Gastrocnemius medialis (tissue), 4 donors: ENCODE measurements at regions of chr4 and their contacts with region 1.

Region 1: DNA sequence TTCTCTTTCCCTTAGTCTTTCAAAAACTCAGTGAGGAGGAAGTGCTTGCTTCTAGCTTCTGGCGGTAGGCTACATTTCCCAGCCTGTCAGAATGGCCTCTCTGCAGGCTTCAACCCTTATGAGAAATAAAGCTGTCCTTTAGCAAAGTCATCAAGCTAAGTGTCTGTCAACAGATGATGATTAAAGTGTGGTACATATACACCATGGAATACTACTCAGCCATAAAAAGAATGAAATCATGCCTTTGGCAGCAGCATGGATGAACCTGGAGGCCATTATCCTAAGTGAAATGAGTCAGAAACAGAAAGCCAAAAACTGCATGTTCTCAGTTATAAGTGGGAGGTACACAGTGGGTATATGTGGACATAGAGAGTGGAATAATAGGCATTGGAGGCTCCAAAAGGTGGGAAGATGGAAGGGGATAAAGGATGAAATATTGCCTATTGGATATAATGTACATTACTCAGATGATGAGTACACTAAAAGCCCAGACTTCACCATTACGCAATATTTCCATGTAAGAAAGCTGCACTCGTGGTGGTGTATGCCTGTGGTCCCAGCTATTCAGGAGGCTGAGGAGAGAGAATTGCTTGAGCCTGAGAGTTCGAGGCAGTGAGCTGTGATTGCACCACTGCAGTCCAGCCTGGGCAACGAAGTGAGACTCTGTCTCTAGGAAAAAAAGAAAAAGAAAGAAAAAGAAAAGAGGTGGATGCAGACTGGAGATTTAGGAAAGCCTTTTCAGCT is 7.9 kb downstream of the TRIM2 start:
- DNase-seq: no peak
- ATAC-seq: peak in 1 of 2 donors; percentile 36
- H3K4me3 ChIP-seq: no peak overlapping the region
- H3K27ac ChIP-seq: no peak overlapping the region
- H3K4me1 ChIP-seq: no peaks in the 10 kb centered on the region
- H3K27me3 ChIP-seq: no peaks in the 10 kb centered on the region
- CTCF ChIP-seq: no peak
- POLR2A ChIP-seq: no peak

Region 2: DNA sequence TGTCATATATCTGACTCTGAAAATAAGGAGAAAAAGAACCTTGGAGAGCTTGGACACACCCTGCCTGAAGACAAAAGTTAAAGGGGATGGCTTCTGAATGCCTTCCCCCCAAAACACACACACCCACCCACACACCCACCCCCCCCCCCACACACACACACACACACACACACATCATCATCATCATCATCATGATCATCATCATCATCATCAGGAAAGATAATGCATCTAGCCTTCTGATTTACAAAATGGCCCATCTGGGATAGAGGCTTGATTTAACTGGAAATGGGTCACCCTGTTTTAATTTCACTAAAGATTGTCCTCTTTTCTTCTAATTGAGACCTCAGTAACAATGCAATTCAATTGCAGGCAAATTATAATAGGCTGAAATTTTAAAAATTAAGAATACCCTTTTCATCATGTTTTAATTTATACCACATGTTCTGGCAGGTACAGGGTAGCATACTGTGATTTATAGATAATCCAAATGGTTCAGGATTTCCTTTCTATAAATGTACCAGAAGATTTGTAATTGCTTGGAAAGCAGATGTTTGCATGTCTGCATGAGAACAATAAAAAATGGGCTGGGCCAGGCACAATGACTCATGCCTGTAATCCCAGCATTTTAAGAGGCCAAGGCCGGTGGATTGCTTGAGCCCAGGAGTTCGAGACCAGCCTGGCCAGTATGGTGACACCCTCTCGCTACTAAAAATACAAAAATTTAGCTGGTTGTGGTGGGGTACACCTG is 48.6 kb after region 1 on chr4:
- in situ Hi-C with region 1: no loop called
- intact Hi-C with region 1: loop called (anchors 5 kb)
- DNase-seq: no peak
- ATAC-seq: no peak
- H3K4me3 ChIP-seq: no peak overlapping the region
- H3K27ac ChIP-seq: no peak overlapping the region
- H3K4me1 ChIP-seq: peaks cover 0 to 3% of the 10 kb centered on the region in 2 donors
- H3K27me3 ChIP-seq: no peaks in the 10 kb centered on the region
- CTCF ChIP-seq: no peak
- POLR2A ChIP-seq: no peak